H1 (cell line): ENCODE measurements at regions of chr10 and their contacts with region 1.

Region 1: DNA sequence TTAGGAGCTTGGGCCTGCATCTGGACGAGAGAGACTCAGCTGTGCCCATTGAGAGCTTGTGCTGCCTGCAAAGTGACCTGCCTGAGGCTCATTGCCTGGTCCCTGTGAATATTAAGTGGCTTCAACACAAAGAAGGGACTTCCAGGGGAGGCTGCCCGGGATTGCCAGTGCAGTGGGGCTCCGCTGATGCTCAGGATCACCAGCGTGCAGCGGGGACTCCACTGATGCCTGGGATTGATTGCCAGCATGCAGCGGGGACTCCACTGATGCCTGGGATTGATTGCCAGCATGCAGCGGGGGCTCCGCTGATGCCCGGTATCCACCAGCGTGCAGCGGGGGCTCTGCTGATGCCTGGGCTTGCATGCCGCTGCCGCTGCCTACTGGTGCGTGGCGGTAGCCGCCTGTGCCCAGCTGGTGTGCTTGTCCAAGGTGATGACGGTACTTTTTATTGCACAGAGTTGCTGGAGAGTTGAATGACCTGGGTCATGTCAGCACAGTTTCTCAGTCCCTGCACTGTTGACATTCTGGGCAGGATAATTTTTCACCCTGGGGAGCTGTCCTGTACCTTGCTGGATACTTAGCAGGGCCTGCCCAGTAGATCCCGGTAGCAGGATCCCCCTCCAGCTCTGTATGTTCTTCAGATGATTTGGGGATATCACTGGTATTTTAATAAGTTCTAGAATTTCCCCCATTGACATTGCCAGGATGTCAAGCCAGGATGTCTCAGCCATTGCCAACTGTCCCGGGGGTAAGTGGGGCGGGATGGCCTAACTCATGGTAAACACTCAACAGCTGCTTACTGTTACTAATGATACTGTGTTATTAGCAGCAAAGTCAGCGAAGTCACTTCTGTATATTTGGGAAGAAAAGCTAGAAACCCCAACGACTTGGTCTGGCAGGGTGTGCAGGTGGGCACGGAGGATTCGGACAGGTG is 13.0 kb downstream of the DOCK1 start:
- DNase-seq: no peak
- H3K4me3 ChIP-seq: no peak overlapping the region
- H3K27ac ChIP-seq: no peak overlapping the region
- H3K4me1 ChIP-seq: no peaks in the 10 kb centered on the region
- H3K27me3 ChIP-seq: no peaks in the 10 kb centered on the region
- CTCF ChIP-seq: no peak
- EP300 ChIP-seq: no peak
- POLR2A ChIP-seq: no peak
- RAD21 ChIP-seq: no peak

Region 2: GRCh38 chr10:126905776-126906622 is 12.2 kb before region 1 on chr10:
- CTCF ChIA-PET with region 1: interaction called, 16 read pairs
- POLR2A ChIA-PET with region 1: interaction called, 6 read pairs
- DNase-seq: peak in 1 of 2 experiments; percentile 73
- H3K4me3 ChIP-seq: peak overlapping the region; percentile 61 to 91 (median 74)
- H3K27ac ChIP-seq: peak overlapping the region; percentile 78; the same call in 1 of the 2 replicates
- H3K4me1 ChIP-seq: peaks cover 0 to 21% (median 15%) of the 10 kb centered on the region in 4 experiments; a peak in 5 of 7 replicates
- H3K27me3 ChIP-seq: no peaks in the 10 kb centered on the region
- CTCF ChIP-seq: no peak
- EP300 ChIP-seq: no peak
- POLR2A ChIP-seq: peak; percentile 64 to 73; a peak in 2 of 3 replicates
- RAD21 ChIP-seq: no peak

Region 3: DNA sequence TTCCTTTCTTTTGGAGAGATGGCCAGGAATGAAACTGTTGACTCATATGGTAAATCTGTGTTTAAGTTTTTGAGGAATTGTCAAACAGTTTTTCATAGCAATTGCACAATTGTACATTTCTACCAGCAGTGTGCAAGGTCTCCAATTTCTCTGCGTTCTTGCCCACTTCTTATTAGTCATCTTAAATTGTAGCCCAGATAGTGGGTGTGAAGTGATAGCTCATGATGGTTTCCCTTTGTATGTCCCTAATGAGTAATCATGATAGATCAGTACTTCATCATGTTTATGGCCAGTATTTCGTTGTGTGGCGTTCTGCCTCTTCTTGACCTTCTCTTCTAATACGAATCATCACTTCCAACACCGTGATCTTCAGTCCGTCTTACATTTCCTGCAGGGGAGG is 123.3 kb after region 1 on chr10:
- CTCF ChIA-PET with region 1: no interaction called
- POLR2A ChIA-PET with region 1: no interaction called
- DNase-seq: no peak
- H3K4me3 ChIP-seq: no peak overlapping the region
- H3K27ac ChIP-seq: no peak overlapping the region
- H3K4me1 ChIP-seq: no peaks in the 10 kb centered on the region
- H3K27me3 ChIP-seq: no peaks in the 10 kb centered on the region
- CTCF ChIP-seq: no peak
- EP300 ChIP-seq: no peak
- POLR2A ChIP-seq: no peak
- RAD21 ChIP-seq: no peak